MCF 10A (cell line): ENCODE measurements at regions of chr12 and their contacts with region 1.

Region 1: DNA sequence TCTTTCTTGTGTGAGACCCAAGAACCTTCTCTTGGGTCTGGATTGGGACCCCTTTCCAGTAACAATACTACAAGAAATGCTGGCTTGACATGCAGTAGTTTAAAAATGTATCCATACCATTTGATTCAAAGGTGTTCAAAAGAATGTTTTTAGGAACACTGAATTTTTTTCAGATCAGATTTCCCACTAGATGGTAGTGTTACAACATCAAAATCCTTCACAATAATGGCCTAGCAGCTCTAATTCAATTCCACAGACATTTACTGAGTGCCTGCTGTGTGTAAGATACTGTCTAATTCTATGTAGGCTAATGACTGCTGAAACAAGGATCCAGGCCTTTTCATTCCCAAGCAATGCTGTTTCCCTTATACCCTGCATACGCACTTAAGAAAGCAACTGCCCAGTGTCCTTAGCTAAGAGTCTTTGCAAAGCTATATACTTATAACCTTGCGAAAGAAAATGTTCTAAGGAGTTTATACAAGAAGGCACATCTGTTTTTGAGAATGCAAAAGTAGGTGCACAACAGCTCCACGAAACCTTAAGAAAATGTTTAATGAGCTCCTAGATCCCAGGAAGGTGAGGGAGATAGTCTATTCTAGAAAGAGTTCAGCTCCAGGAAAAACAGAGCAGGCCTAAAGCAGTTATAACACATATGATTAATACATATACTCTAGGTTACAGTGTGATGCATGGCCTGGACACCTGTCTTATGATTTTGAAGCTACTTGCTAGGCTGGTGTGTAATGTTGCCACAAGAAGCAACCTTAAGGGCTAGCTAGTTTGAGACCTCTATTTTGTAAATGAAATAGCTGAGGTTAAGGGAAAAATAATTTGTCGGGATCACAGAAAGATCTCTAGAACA is 50.9 kb upstream of the PKP2 start:
- DNase-seq: peak; percentile 45
- H3K4me3 Mint-ChIP-seq: no peak overlapping the region
- H3K27ac Mint-ChIP-seq: peak overlapping the region; percentile 69
- H3K4me1 Mint-ChIP-seq: peaks cover 6% of the 10 kb centered on the region
- H3K27me3 Mint-ChIP-seq: peaks cover 11% of the 10 kb centered on the region
- CTCF ChIP-seq: peak; percentile 45

Region 2: DNA sequence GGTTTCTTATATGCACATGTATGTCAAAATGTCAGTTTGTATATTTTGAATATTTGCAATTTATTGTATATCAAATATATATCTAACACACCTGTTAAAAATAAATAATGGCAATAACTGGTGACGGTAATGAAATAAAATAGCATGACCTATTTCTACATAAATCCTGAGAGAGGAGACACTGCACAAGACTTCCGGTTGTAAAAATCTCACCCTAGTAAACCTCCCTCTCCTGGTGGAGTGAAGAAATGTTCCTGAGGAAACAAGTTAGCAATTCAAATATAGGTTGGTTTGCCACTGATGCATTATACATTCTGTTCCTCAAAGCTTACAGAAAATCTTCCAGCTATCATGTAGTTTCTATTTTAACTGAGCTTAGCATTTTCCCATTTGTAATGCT is 658.3 kb after region 1 on chr12:
- CTCF ChIA-PET with region 1: interaction called, 6 read pairs
- POLR2A ChIA-PET with region 1: no interaction called
- intact Hi-C with region 1: loop called (anchors 1 kb)
- DNase-seq: peak; percentile 43
- H3K4me3 Mint-ChIP-seq: no peak overlapping the region
- H3K27ac Mint-ChIP-seq: no peak overlapping the region
- H3K4me1 Mint-ChIP-seq: no peaks in the 10 kb centered on the region
- H3K27me3 Mint-ChIP-seq: peaks cover 27% of the 10 kb centered on the region
- CTCF ChIP-seq: peak; percentile 32